ENCODE measurements at regions of chr1 and their contacts with region 1.

Region 1: GRCh38 chr1:9629445-9630201 is 21.9 kb upstream of the PIK3CD start:
- DNase-seq: peak; percentile 82
- CTCF ChIP-seq: no peak

Region 2: DNA sequence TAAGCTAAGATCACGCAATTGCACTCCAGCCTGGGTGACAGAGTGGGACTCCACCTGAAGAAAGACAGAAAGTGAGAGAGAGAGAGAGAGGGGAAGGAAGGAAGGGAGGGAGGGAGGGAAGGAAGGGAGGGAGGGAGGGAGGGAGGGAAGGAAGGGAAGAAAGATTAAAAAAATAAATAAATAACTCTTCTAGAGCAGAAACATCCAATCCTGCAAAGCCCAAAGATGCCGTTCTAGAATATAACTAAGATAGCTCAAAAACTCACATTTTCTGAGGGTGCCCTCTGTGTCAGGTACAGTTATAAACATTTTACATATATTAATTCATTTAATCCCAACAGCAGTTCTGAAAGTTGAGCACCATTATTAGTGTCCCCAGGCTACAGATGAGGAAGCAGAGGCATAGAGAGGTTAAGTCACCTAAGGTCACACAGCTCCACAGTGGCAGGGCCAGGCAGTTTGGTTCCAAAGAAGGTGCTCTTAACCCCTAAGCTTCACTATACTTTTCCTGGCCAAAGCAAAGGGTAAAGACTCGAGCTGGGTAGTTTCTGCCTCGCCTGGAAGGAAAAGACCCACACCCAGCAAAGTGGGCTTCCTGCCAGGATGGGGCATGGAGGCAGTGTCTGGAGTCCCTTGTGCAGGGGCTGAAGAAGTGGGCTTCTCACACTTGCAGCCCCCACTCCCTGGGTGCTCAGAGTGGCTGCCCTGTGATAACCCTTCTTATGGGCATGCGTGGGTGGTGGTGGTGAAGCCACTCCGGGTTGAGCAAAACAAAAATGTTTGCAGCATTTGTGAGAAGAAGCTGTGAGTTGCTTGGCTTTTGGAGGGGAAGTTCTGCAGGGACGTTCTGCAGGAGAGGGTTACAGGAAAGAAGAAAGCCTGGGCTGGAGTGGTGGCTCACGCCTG is 14.0 kb after region 1 on chr1:
- CTCF ChIA-PET with region 1: interaction called, 36 read pairs
- POLR2A ChIA-PET with region 1: interaction called, 3 read pairs
- DNase-seq: no peak
- CTCF ChIP-seq: no peak

Region 3: DNA sequence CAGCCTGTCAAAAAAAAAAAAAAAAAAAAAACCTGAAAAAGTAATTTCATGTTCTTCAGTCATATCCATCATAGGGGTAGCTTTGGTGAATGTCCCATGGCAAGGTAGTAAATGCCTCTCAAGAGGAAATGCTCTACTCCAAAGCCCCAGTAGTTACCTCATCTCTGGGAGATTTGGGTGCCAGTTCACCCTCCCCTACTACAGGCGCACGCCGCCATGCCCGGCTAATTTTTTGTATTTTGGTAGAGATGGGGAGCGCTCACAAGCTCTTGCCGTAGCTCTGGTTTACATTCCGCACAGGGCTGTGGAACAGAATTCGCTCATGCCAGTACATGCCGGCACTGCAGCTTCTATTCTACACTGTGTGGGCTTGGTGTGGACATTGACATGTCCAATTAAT is 35.6 kb after region 1 on chr1:
- CTCF ChIA-PET with region 1: interaction called, 27 read pairs
- POLR2A ChIA-PET with region 1: interaction called, 3 read pairs
- DNase-seq: no peak
- CTCF ChIP-seq: no peak

Region 4: DNA sequence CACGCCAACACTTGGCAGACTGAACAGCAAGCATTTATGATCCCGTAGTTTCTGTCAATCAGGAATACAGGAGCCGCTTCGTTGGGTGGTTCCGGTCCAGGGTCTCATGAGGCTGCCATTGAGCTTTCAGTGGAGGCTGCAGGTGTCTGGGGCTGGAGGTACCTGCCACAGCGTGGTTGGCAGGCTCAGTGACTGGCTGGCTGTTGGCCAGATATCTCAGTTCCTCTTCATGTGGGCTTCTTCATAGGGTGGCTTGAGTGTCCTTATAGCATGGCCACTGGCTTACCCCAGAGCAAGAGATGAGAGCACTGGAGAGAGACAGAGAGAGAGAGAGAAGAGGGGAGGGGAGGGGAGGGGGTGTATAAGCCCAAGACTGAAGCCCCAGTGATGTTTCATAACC is 51.2 kb after region 1 on chr1:
- CTCF ChIA-PET with region 1: interaction called, 14 read pairs
- POLR2A ChIA-PET with region 1: interaction called, 4 read pairs
- DNase-seq: no peak
- CTCF ChIP-seq: no peak

Region 5: GRCh38 chr1:9705337-9706093 is 75.9 kb after region 1 on chr1:
- CTCF ChIA-PET with region 1: interaction called, 10 read pairs
- POLR2A ChIA-PET with region 1: no interaction called
- DNase-seq: no peak
- CTCF ChIP-seq: no peak

Region 6: GRCh38 chr1:9867408-9868243 is 238.0 kb after region 1 on chr1:
- CTCF ChIA-PET with region 1: interaction called, 18 read pairs
- POLR2A ChIA-PET with region 1: interaction called, 3 read pairs
- DNase-seq: peak; percentile 91
- CTCF ChIP-seq: peak; percentile 99